ENCODE measurements at regions of chr15 and their contacts with region 1.

Region 1: GRCh38 chr15:25775317-25775912 is 87.7 kb downstream of the ATP10A start:
- DNase-seq: peak in 2 of 3 donors; percentile 77 to 79
- ATAC-seq: peak; percentile 84 to 95
- H3K4me3 ChIP-seq: no peak overlapping the region
- H3K27ac ChIP-seq: no peak overlapping the region
- H3K4me1 ChIP-seq: peaks cover 2% of the 10 kb centered on the region
- H3K27me3 ChIP-seq: no peaks in the 10 kb centered on the region

Region 2: GRCh38 chr15:25850154-25851111 is 75.0 kb after region 1 on chr15:
- intact Hi-C with region 1: loop called in 1 of 4 experiments (anchors 10 kb)
- DNase-seq: peak; percentile 92 to 94 (median 94)
- ATAC-seq: peak; percentile 94 to 96
- H3K4me3 ChIP-seq: peak overlapping the region; percentile 31
- H3K27ac ChIP-seq: peak overlapping the region; percentile 55
- H3K4me1 ChIP-seq: no peaks in the 10 kb centered on the region
- H3K27me3 ChIP-seq: no peaks in the 10 kb centered on the region

Measured in right cardiac atrium (tissue), 5 donors.